ENCODE measurements at regions of chr11 and their contacts with region 1.

Region 1: GRCh38 chr11:126607374-126607773 is 251.9 kb downstream of the ST3GAL4 start:
- DNase-seq: peak; percentile 33
- ATAC-seq: peak; percentile 98
- H3K4me3 ChIP-seq: no peak overlapping the region
- H3K27ac ChIP-seq: no peak overlapping the region
- H3K4me1 ChIP-seq: peaks cover 3% of the 10 kb centered on the region
- H3K27me3 ChIP-seq: peaks cover 7 to 34% of the 10 kb centered on the region in 2 experiments; a peak in 3 of 5 replicates
- CTCF ChIP-seq: peak; percentile 86
- EP300 ChIP-seq: no peak
- POLR2A ChIP-seq: no peak
- RAD21 ChIP-seq: peak; percentile 73

Region 2: GRCh38 chr11:126499131-126499752 is 108.1 kb before region 1 on chr11:
- CTCF ChIA-PET with region 1: no interaction called
- POLR2A ChIA-PET with region 1: no interaction called
- in situ Hi-C with region 1: no loop called
- intact Hi-C with region 1: no loop called
- DNase-seq: no peak
- ATAC-seq: no peak
- H3K4me3 ChIP-seq: no peak overlapping the region
- H3K27ac ChIP-seq: no peak overlapping the region
- H3K4me1 ChIP-seq: no peaks in the 10 kb centered on the region
- H3K27me3 ChIP-seq: peaks cover 6 to 57% of the 10 kb centered on the region in 2 experiments
- CTCF ChIP-seq: no peak
- EP300 ChIP-seq: no peak
- POLR2A ChIP-seq: no peak
- RAD21 ChIP-seq: no peak

Region 3: DNA sequence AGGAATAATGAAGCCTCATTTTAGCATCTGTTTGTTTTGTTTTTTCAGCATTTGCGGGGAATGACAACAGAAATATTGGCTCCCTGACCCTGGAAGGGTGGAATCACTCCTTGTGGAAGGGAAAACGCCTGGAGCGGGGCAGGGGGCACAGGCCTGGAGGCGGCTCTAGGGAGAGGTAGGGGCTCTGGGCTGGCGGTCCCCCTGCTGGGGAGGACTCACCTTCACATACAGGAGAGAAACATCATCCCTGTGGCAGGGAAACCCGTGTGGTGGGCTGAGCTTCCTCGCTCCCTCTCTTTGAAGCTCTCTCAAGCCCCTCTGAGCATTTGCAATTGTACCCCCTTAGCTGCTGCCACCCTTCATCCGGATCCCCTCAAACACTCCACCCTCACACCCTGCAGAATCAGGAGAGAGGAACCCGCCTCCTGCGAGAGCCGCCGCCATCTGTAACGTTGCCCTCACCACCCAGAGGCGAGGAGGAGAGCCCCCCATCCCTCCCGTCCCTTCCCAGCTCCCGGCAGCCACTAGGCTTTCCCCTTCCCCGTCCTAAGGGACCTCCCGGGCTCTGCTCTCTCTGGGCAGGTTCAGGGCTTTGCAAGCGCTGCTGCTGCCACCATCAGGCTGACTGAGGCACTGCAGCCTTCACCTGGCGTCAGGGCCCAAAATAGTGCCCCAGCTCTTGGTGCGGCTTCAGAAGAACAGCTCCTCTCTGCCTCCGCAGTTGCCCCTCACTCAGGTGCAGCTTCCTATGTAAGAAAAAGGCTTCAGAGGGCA is 382.8 kb after region 1 on chr11:
- CTCF ChIA-PET with region 1: interaction called, 7 read pairs
- POLR2A ChIA-PET with region 1: no interaction called
- in situ Hi-C with region 1: loop called (anchors 5 kb)
- intact Hi-C with region 1: loop called (anchors 1 kb)
- DNase-seq: peak; percentile 38
- ATAC-seq: peak; percentile 97
- H3K4me3 ChIP-seq: no peak overlapping the region
- H3K27ac ChIP-seq: no peak overlapping the region
- H3K4me1 ChIP-seq: no peaks in the 10 kb centered on the region
- H3K27me3 ChIP-seq: peaks cover 3 to 22% of the 10 kb centered on the region in 2 experiments; a peak in 4 of 5 replicates
- CTCF ChIP-seq: peak; percentile 94
- EP300 ChIP-seq: no peak
- POLR2A ChIP-seq: no peak
- RAD21 ChIP-seq: peak; percentile 81

Region 4: GRCh38 chr11:127074151-127074761 is 466.9 kb after region 1 on chr11:
- CTCF ChIA-PET with region 1: no interaction called
- POLR2A ChIA-PET with region 1: no interaction called
- in situ Hi-C with region 1: no loop called
- intact Hi-C with region 1: loop called (anchors 10 kb)
- DNase-seq: peak; percentile 38
- ATAC-seq: peak; percentile 98
- H3K4me3 ChIP-seq: no peak overlapping the region
- H3K27ac ChIP-seq: no peak overlapping the region
- H3K4me1 ChIP-seq: no peaks in the 10 kb centered on the region
- H3K27me3 ChIP-seq: peaks cover 0 to 4% of the 10 kb centered on the region in 2 experiments; a peak in 1 of 5 replicates
- CTCF ChIP-seq: peak; percentile 49
- EP300 ChIP-seq: no peak
- POLR2A ChIP-seq: no peak
- RAD21 ChIP-seq: peak; percentile 36; the same call in 1 of the 2 replicates